ENCODE measurements at regions of chr1 and their contacts with region 1.

Region 1: GRCh38 chr1:158998781-158999161 is 10.9 kb upstream of the IFI16 start:
- DNase-seq: peak; percentile 67 to 78
- H3K4me3 ChIP-seq: peak overlapping the region; percentile 51 to 55
- H3K27ac ChIP-seq: peak overlapping the region; percentile 83 to 85
- H3K4me1 ChIP-seq: peaks cover 0 to 21% (median 7%) of the 10 kb centered on the region in 4 donors
- H3K27me3 ChIP-seq: no peaks in the 10 kb centered on the region
- CTCF ChIP-seq: peak; percentile 88 to 94

Region 2: DNA sequence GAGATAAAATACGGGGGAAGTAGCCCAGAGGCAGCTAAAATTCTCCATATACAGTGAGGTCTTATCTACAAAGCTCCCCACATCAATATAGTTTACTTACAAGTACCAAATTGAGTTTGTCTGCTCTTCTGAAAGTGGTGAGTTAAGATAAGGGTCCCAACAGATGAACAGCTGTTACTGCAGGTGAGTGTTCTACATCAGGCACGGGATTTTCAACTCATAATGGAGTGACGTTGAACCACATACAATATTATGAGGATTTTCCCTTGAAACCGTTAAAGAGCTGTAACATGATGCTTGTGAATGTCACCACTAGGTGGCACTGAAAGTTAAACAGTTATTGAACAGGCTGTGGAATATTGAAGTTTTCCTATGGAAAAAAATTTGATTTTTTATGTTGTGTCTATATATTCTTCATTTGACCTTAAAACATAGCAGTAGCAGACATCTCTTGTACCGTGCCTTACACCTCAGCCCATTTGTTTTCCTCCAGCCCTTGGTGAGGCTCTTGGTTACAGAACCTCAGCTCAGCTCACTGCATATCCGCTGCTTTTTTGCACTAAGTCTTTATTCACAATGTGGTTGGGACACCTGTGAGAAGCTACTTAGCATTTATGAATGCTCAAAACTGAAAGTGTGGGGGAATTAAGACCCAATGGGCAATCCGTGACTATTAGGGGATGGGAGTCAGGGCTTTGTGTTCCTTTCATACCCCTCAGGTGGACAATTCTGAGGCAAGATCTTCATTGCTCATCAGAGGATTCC is 794.9 kb before region 1 on chr1:
- intact Hi-C with region 1: loop called (anchors 5 kb)
- DNase-seq: no peak
- H3K4me3 ChIP-seq: no peak overlapping the region
- H3K27ac ChIP-seq: no peak overlapping the region
- H3K4me1 ChIP-seq: no peaks in the 10 kb centered on the region
- H3K27me3 ChIP-seq: no peaks in the 10 kb centered on the region
- CTCF ChIP-seq: peak; percentile 73 to 76

Region 3: GRCh38 chr1:158506369-158506987 is 492.3 kb before region 1 on chr1:
- intact Hi-C with region 1: loop called (anchors 10 kb)
- DNase-seq: no peak
- H3K4me3 ChIP-seq: no peak overlapping the region
- H3K27ac ChIP-seq: no peak overlapping the region
- H3K4me1 ChIP-seq: peaks cover 0 to 31% (median 11%) of the 10 kb centered on the region in 4 donors
- H3K27me3 ChIP-seq: no peaks in the 10 kb centered on the region
- CTCF ChIP-seq: peak; percentile 30 to 35

Region 4: GRCh38 chr1:158686111-158687009 is 312.4 kb before region 1 on chr1 and contains the start of gene SPTA1:
- intact Hi-C with region 1: no loop called
- DNase-seq: no peak
- H3K4me3 ChIP-seq: no peak within 1 kb of the TSS
- H3K27ac ChIP-seq: no peak within 1 kb of the TSS
- H3K4me1 ChIP-seq: no peaks in the 10 kb centered on the region
- H3K27me3 ChIP-seq: no peaks in the 10 kb centered on the region
- CTCF ChIP-seq: no peak